Activated CD4-positive, alpha-beta T cell treated with anti-CD3 and anti-CD28 coated beads for 36 hours (primary cell): ENCODE measurements at regions of chr14 and their contacts with region 1.

Region 1: GRCh38 chr14:20477211-20477876 is 8.1 kb downstream of the PNP start:
- DNase-seq: peak; percentile 45
- ATAC-seq: peak; percentile 68
- H3K4me3 Mint-ChIP-seq: peak overlapping the region; percentile 28
- H3K27ac Mint-ChIP-seq: peak overlapping the region; percentile 90
- H3K4me1 Mint-ChIP-seq: peaks cover 76% of the 10 kb centered on the region
- H3K27me3 Mint-ChIP-seq: no peaks in the 10 kb centered on the region

Region 2: DNA sequence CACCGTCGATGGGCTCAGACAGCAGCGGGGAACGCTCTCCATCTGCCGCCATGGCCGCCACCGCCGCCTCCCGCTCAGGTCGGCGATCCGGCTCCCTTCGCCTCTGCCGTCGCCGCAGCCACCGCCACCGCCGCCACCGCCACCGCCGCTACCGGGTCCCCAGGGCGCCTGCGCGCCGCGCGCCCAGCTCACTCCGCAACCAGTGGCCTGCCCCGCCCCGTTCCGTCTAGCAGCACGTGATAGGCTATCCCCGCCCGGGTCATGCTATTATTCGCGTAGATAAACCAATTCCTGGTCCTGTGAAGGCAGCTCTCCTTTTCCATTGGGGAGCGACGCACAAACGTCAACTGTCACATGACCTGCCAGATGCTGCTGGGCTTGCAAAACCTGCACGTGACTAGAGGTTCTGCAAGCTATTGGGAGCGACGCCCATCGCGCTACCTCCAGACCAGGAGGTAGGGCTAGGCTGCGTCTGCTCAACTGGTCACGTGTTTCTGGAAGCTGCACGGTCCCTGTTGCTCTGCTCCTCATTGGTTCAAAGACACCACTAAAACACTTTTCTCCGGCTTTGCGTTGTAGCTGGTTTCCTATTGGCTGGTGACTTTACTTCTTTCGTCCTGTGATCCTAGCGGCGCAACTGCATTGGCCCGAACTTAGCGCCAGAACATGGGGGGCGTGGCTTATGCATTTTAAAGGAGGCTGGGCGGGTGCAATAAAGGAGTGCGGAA is 15.9 kb before region 1 on chr14 and contains the start of gene PIP4P1:
- CTCF ChIA-PET with region 1: interaction called, 4 read pairs
- POLR2A ChIA-PET with region 1: interaction called, 13 read pairs
- intact Hi-C with region 1: no loop called
- DNase-seq: peak; percentile 99
- ATAC-seq: peak; percentile 95
- H3K4me3 Mint-ChIP-seq: peak within 1 kb of the TSS; percentile 84
- H3K27ac Mint-ChIP-seq: peak within 1 kb of the TSS; percentile 96
- H3K4me1 Mint-ChIP-seq: peaks cover 26% of the 10 kb centered on the region
- H3K27me3 Mint-ChIP-seq: no peaks in the 10 kb centered on the region
- total RNA-seq, gene PIP4P1: 24.2 to 24.7 TPM

Region 3: GRCh38 chr14:20494935-20495766 is 17.8 kb after region 1 on chr14:
- CTCF ChIA-PET with region 1: interaction called, 3 read pairs
- POLR2A ChIA-PET with region 1: interaction called, 3 read pairs
- intact Hi-C with region 1: loop called in 1 of 2 experiments (anchors 2 kb)
- DNase-seq: no peak
- ATAC-seq: peak; percentile 73
- H3K4me3 Mint-ChIP-seq: no peak overlapping the region
- H3K27ac Mint-ChIP-seq: peak overlapping the region; percentile 64
- H3K4me1 Mint-ChIP-seq: peaks cover 55% of the 10 kb centered on the region
- H3K27me3 Mint-ChIP-seq: no peaks in the 10 kb centered on the region